ENCODE measurements at regions of chr14 and their contacts with region 1.

Region 1: DNA sequence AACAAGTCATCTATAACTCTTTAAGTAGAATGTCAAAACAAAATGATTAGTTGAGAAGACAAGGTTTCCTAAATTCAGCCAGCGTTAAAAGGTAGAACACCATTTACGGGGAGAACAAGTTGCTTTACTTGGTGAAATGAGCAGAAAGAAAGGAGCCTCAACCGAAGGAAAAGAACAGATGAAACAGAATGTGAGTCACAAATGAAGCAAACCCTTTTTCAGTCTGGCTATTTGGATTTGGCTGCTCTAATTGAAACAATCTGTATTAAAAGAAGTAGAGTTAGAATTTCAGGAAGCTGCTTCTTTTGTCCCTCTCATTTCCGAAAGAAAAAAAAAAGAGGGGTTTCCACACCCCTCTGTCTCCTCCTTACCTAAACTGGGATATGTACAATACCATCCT is 34.6 kb downstream of the CEP128 start:
- DNase-seq: no peak
- H3K4me3 ChIP-seq: no peak overlapping the region
- H3K27ac ChIP-seq: no peak overlapping the region
- H3K4me1 ChIP-seq: no peaks in the 10 kb centered on the region
- H3K27me3 ChIP-seq: no peaks in the 10 kb centered on the region
- CTCF ChIP-seq: no peak
- POLR2A ChIP-seq: no peak

Region 2: GRCh38 chr14:80926397-80927074 is 19.6 kb after region 1 on chr14:
- intact Hi-C with region 1: loop called (anchors 1 kb)
- DNase-seq: no peak
- H3K4me3 ChIP-seq: no peak overlapping the region
- H3K27ac ChIP-seq: no peak overlapping the region
- H3K4me1 ChIP-seq: no peaks in the 10 kb centered on the region
- H3K27me3 ChIP-seq: no peaks in the 10 kb centered on the region
- CTCF ChIP-seq: no peak
- POLR2A ChIP-seq: no peak

Measured in vagina (tissue), 2 donors.